Posterior vena cava (tissue), 2 donors: ENCODE measurements at regions of chr5 and their contacts with region 1.

Region 1: GRCh38 chr5:134465816-134466240 is 54.1 kb upstream of the CDKN2AIPNL start:
- DNase-seq: peak; percentile 97

Region 2: GRCh38 chr5:134073404-134073803 is 392.4 kb before region 1 on chr5:
- intact Hi-C with region 1: no loop called
- DNase-seq: no peak

Region 3: DNA sequence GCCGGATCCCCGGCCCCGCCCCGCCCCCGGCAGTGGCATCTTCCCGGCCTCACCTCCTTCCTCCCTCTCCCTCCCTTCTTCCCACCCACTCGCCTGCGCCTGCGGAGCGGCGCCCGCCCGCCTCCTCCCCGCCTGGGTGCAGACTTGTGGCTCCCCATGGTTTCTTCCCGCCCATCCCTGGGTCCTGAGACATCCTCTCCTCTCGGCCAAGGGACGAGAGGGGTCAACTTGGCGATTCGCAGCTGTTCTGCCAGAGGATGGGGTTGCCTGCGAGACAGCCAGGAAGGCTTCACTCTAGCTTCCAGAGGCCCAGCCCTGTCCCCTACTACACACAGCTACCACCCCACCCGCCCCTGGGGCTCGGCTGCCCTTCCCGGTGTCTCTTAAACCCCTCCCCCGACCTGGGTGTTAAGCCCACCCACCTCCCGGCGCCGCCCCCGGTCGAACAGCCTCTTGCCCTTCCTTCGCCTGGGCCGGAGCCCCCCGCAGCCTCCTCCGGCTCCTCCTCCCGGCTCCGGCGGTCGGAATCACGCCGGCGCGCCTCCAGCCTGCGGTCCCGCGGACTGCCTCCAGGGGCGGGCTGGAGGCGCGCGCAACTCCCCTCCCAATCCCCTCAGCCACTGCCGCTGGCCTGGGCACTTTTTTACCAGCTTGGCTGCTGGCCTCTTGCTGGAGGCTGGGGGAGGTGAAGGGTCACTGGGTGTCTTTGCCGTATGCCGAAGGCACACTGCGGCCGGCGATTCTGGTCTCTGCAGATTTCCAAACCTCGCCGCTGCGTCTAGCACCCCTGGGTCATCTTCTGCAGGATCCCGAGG is 61.5 kb after region 1 on chr5:
- intact Hi-C with region 1: loop called in 1 of 2 experiments (anchors 10 kb)
- DNase-seq: peak; percentile 95

Region 4: GRCh38 chr5:136249678-136250266 is 1783.9 kb after region 1 on chr5:
- intact Hi-C with region 1: loop called in 1 of 2 experiments (anchors 10 kb)
- DNase-seq: peak; percentile 83